ENCODE measurements at regions of chr12 and their contacts with region 1.

Region 1: GRCh38 chr12:1117970-1118563 is 127.0 kb downstream of the ERC1 start:
- DNase-seq: peak; percentile 69 to 78
- ATAC-seq: peak; percentile 79
- H3K4me3 ChIP-seq: no peak overlapping the region
- H3K27ac ChIP-seq: no peak overlapping the region
- H3K4me1 ChIP-seq: no peaks in the 10 kb centered on the region
- H3K27me3 ChIP-seq: no peaks in the 10 kb centered on the region

Region 2: DNA sequence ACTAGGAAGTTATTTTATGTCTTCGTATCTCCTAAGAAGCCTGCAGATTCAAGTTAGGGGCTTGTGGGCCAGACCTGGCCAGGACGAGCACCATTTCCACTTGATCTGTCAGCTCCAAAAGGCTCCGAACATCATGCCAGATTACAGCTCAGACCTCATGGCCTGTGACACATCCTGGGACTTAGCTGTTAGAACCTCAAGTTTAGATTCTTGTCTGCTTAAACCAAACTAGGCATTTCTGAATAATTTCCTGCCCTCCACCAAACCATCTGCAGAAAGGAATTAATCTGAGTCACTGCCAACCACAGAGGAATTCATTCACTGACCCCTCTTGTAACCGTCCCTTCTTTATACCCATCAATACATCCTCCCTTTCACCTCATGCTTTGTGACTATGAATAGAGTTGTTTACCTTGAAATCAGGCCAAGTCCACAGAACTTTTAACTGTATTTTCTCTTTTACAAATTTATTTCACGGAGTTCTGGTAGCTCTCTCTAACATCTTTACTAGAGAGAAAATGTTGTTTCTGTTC is 356.0 kb after region 1 on chr12:
- intact Hi-C with region 1: no loop called
- DNase-seq: no peak
- ATAC-seq: no peak
- H3K4me3 ChIP-seq: no peak overlapping the region
- H3K27ac ChIP-seq: peak overlapping the region; percentile 21 to 81
- H3K4me1 ChIP-seq: peaks cover 0 to 9% of the 10 kb centered on the region in 2 donors
- H3K27me3 ChIP-seq: no peaks in the 10 kb centered on the region

Region 3: GRCh38 chr12:1583421-1584078 is 465.5 kb after region 1 on chr12:
- intact Hi-C with region 1: loop called (anchors 1 to 2 kb)
- DNase-seq: peak; percentile 62 to 71
- ATAC-seq: peak; percentile 91
- H3K4me3 ChIP-seq: no peak overlapping the region
- H3K27ac ChIP-seq: no peak overlapping the region
- H3K4me1 ChIP-seq: no peaks in the 10 kb centered on the region
- H3K27me3 ChIP-seq: no peaks in the 10 kb centered on the region

Region 4: GRCh38 chr12:1605129-1606020 is 487.3 kb after region 1 on chr12:
- intact Hi-C with region 1: loop called in 1 of 2 experiments (anchors 5 kb)
- DNase-seq: peak; percentile 82 to 85
- ATAC-seq: peak; percentile 92
- H3K4me3 ChIP-seq: peak overlapping the region; percentile 31 to 35
- H3K27ac ChIP-seq: peak overlapping the region in 1 of 2 donors; percentile 83
- H3K4me1 ChIP-seq: no peaks in the 10 kb centered on the region
- H3K27me3 ChIP-seq: no peaks in the 10 kb centered on the region

Measured in aorta (tissue), 5 donors.